ENCODE measurements at regions of chr1 and their contacts with region 1.

Region 1: GRCh38 chr1:6393400-6394187 is at the start of gene ACOT7:
- DNase-seq: peak; percentile 97
- H3K4me3 Mint-ChIP-seq: peak within 1 kb of the TSS; percentile 93
- H3K27ac Mint-ChIP-seq: peak within 1 kb of the TSS; percentile 97
- H3K4me1 Mint-ChIP-seq: peaks cover 33% of the 10 kb centered on the region
- H3K27me3 Mint-ChIP-seq: no peaks in the 10 kb centered on the region
- total RNA-seq, gene ACOT7: 133 and 136 TPM in 2 replicates

Region 2: DNA sequence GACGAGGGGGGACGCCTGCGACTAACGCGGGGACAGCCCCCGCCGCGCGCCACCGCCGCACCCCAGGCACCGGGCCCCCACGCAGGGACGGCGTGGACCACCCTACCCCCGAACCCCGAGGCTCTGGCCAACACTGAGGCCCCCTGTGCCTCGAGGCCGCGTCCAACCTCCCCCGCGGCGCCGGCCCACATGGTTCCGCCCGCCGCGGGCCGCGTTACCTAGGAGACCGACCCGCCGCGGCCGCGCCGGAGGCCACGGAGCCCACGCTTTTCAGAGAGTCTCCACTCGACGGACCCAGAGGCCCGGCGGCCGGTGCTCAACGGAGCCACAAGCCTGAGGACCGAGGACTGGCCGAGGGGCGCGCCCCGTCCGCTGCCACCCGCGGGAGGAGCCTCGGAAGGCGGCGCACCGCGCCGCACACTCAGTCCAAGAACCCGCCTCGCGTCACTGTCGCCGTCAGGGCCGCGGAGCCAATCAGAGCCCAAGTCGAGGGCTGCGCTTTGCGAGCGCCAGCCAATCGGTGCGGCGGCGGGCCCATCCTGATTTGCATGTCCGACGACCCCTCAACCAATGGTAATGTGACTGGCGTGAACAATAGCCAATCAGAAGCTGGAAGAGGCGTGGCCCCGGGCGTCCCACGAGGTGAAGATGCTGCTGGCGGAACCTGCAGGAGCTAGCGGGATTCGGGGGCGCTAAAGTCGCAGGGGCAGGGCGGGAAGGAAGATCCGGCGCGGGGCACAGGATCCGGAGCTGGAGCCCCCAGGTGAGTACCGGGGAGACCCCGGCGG is 401.4 kb before region 1 on chr1 and contains the start of gene NPHP4:
- intact Hi-C with region 1: loop called (anchors 10 kb)
- DNase-seq: peak; percentile 100
- H3K4me3 Mint-ChIP-seq: peak within 1 kb of the TSS; percentile 99
- H3K27ac Mint-ChIP-seq: peak within 1 kb of the TSS; percentile 97
- H3K4me1 Mint-ChIP-seq: peaks cover 26% of the 10 kb centered on the region
- H3K27me3 Mint-ChIP-seq: no peaks in the 10 kb centered on the region
- total RNA-seq, gene NPHP4: 20.0 and 21.0 TPM in 2 replicates

Region 3: GRCh38 chr1:6205849-6206519 is 187.6 kb before region 1 on chr1 and contains the start of gene RNF207:
- intact Hi-C with region 1: loop called (anchors 5 kb)
- DNase-seq: peak; percentile 94
- H3K4me3 Mint-ChIP-seq: peak within 1 kb of the TSS; percentile 85
- H3K27ac Mint-ChIP-seq: peak within 1 kb of the TSS; percentile 82
- H3K4me1 Mint-ChIP-seq: peaks cover 17% of the 10 kb centered on the region
- H3K27me3 Mint-ChIP-seq: no peaks in the 10 kb centered on the region
- total RNA-seq, gene RNF207: 53.2 and 54.7 TPM in 2 replicates

Region 4: GRCh38 chr1:6343506-6344405 is 49.8 kb before region 1 on chr1:
- intact Hi-C with region 1: loop called (anchors 1 kb)
- DNase-seq: peak; percentile 92
- H3K4me3 Mint-ChIP-seq: no peak overlapping the region
- H3K27ac Mint-ChIP-seq: no peak overlapping the region
- H3K4me1 Mint-ChIP-seq: peaks cover 11% of the 10 kb centered on the region
- H3K27me3 Mint-ChIP-seq: no peaks in the 10 kb centered on the region

Region 5: GRCh38 chr1:6359216-6360116 is 34.1 kb before region 1 on chr1:
- intact Hi-C with region 1: loop called (anchors 1 kb)
- DNase-seq: peak; percentile 93
- H3K4me3 Mint-ChIP-seq: peak overlapping the region; percentile 80
- H3K27ac Mint-ChIP-seq: peak overlapping the region; percentile 94
- H3K4me1 Mint-ChIP-seq: peaks cover 39% of the 10 kb centered on the region
- H3K27me3 Mint-ChIP-seq: no peaks in the 10 kb centered on the region